ENCODE measurements at regions of chr11 and their contacts with region 1.

Region 1: DNA sequence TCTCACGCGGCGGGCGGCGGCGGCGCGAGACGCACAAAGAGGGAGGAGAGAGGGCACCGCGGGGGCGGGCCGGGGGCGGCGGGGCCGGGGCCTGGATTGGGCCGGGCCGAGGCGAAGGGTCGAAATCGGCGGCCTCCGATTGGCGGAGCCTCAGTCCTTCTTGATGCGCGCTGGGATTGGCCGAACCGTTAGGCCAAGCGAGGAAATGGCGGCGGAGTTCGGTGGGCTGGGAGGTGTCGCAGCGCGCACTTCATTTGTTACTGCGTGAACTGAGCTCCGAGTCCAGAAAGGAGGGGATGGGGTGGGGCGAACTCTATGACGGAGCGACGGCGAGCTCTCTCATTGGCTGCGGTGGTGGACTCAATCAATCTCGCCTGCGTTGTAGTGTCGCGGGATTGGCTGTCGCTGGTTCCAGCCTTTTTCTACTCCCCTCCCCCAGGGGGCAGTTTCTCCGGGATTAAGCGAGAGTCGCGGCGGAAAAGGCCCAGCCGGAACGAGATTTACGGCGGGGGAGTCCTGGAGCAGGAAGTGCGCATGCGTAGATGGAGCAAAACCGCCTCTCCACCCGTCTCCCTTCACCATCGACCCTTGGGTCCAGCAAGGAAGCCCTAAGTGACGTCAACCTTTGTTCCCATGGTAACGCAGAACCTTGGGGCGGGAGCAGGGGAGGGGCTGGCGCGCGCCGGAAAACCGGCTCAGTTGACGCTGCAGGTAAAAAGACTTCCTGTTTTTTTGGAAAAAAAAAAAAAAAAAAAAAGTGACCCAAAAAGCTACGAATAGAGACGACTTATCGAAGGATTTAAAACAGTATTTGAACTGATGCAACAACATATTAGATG is at the start of gene SF1:
- DNase-seq: peak; percentile 91
- ATAC-seq: peak; percentile 81
- H3K4me3 Mint-ChIP-seq: peak within 1 kb of the TSS; percentile 90
- H3K27ac Mint-ChIP-seq: peak within 1 kb of the TSS; percentile 99
- H3K4me1 Mint-ChIP-seq: peaks cover 75% of the 10 kb centered on the region
- H3K27me3 Mint-ChIP-seq: no peaks in the 10 kb centered on the region
- CTCF ChIP-seq: no peak
- total RNA-seq, gene SF1: 640 and 687 TPM in 2 replicates

Region 2: GRCh38 chr11:64742889-64743590 is 35.7 kb before region 1 on chr11:
- CTCF ChIA-PET with region 1: interaction called, 4 read pairs
- POLR2A ChIA-PET with region 1: interaction called, 197 read pairs
- intact Hi-C with region 1: no loop called
- DNase-seq: peak; percentile 89
- ATAC-seq: peak; percentile 12
- H3K4me3 Mint-ChIP-seq: peak overlapping the region; percentile 96
- H3K27ac Mint-ChIP-seq: no peak overlapping the region
- H3K4me1 Mint-ChIP-seq: peaks cover 43% of the 10 kb centered on the region
- H3K27me3 Mint-ChIP-seq: no peaks in the 10 kb centered on the region
- CTCF ChIP-seq: peak; percentile 85

Region 3: GRCh38 chr11:64803163-64803845 is 24.6 kb after region 1 on chr11 and contains the start of gene MAP4K2:
- CTCF ChIA-PET with region 1: interaction called, 4 read pairs
- POLR2A ChIA-PET with region 1: interaction called, 86 read pairs
- intact Hi-C with region 1: loop called (anchors 1 kb)
- DNase-seq: peak; percentile 91
- ATAC-seq: peak; percentile 80
- H3K4me3 Mint-ChIP-seq: peak within 1 kb of the TSS; percentile 87
- H3K27ac Mint-ChIP-seq: peak within 1 kb of the TSS; percentile 91
- H3K4me1 Mint-ChIP-seq: peaks cover 52% of the 10 kb centered on the region
- H3K27me3 Mint-ChIP-seq: no peaks in the 10 kb centered on the region
- CTCF ChIP-seq: no peak
- total RNA-seq, gene MAP4K2: 69.1 and 73.6 TPM in 2 replicates

Region 4: GRCh38 chr11:64864473-64865285 is 86.0 kb after region 1 on chr11:
- CTCF ChIA-PET with region 1: no interaction called
- POLR2A ChIA-PET with region 1: interaction called, 13 read pairs
- intact Hi-C with region 1: no loop called
- DNase-seq: no peak
- ATAC-seq: no peak
- H3K4me3 Mint-ChIP-seq: peak overlapping the region; percentile 73
- H3K27ac Mint-ChIP-seq: peak overlapping the region; percentile 92
- H3K4me1 Mint-ChIP-seq: peaks cover 96% of the 10 kb centered on the region
- H3K27me3 Mint-ChIP-seq: no peaks in the 10 kb centered on the region
- CTCF ChIP-seq: no peak

Region 5: DNA sequence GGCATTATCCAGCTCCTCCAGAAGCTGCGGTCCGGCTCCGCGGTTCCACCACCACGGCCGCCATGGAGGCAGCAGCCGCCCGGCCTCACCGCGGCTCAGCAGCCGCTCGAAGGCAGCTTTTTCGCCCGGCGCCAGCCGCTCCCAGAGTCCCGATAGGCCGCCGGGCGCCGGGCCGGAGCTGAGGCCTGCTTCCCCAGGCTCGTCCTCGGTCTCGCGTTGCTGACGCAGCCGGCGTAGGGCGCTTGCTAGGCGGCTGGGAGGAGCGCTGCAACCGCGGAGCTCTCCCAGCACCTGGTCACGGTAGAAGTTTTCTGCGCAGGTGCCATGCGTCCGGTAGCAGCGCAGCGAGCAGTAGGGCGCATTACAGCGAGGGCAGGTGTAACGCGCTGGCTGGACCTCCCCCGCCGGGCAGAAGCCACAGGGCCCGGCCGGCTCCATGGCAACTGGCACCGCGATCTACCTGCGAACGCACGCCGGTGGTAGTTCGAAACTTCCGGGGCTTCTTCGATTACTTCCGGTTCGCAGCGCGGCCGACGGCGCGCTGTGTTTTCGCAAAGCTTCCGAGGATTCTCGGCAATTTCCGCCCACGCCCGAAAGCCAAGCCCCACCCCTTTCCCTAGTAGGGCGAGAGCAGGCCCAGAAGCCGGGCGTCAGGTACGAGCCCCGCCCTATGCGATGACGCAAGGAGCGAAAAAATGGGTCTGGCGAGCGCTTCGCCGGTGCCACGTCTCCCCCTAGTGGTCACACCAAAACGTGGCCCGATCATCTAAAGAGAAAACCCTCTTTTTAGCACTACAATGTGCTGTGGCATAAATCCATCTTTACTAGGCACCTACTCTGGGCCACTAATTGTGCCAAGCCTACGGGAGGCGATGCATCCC is 338.7 kb after region 1 on chr11 and contains the start of gene ZNHIT2:
- CTCF ChIA-PET with region 1: no interaction called
- POLR2A ChIA-PET with region 1: interaction called, 9 read pairs
- intact Hi-C with region 1: loop called (anchors 2 kb)
- DNase-seq: peak; percentile 98
- ATAC-seq: peak; percentile 70
- H3K4me3 Mint-ChIP-seq: peak within 1 kb of the TSS; percentile 87
- H3K27ac Mint-ChIP-seq: peak within 1 kb of the TSS; percentile 89
- H3K4me1 Mint-ChIP-seq: peaks cover 76% of the 10 kb centered on the region
- H3K27me3 Mint-ChIP-seq: no peaks in the 10 kb centered on the region
- CTCF ChIP-seq: peak; percentile 34
- total RNA-seq, gene ZNHIT2: 11.3 and 13.4 TPM in 2 replicates